CD8-positive, alpha-beta T cell (primary cell): ENCODE measurements at regions of chr4 and their contacts with region 1.

Region 1: DNA sequence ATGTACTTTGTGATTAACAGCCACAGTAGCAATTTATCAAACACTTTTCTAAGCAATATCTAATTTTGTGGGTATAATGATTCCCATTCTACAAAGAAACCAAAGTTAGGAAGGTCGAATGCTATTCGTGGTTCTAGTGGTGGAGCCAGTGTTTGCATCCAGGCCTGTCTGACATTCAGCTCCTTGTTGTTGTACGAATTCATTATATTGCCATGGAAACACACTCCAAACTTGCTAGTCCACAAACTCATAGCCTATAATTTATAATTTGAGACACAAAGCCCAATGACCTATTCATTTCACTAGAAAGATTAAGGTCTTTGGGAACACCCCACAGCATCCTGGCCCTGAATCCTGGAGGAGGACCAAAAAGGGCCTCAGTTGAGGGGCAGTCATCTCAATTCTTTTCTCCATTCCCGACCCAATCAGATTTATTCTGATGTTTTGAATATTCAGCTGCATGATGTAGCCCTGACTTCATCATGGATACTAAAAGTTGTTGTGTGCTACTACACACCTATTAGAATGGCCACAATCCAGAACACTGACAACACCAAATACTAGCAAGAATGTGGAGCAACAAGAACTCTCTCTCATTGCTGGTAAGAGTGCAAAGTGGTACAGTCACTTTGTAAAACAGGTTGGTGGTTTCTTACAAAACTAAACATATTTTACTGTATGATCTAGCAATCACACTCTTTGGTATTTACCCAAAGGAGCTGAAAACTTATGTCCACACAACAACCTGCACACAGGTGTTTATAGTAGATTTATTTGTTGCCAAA is 51.8 kb upstream of the FRAS1 start:
- DNase-seq: no peak
- ATAC-seq: no peak
- H3K4me3 ChIP-seq: no peak overlapping the region
- H3K4me3 Mint-ChIP-seq: no peak overlapping the region
- H3K27ac ChIP-seq: no peak overlapping the region
- H3K27ac Mint-ChIP-seq: no peak overlapping the region
- H3K4me1 ChIP-seq: no peaks in the 10 kb centered on the region
- H3K4me1 Mint-ChIP-seq: no peaks in the 10 kb centered on the region
- H3K27me3 ChIP-seq: no peaks in the 10 kb centered on the region
- H3K27me3 Mint-ChIP-seq: peaks cover 5% of the 10 kb centered on the region
- CTCF ChIP-seq: no peak

Region 2: DNA sequence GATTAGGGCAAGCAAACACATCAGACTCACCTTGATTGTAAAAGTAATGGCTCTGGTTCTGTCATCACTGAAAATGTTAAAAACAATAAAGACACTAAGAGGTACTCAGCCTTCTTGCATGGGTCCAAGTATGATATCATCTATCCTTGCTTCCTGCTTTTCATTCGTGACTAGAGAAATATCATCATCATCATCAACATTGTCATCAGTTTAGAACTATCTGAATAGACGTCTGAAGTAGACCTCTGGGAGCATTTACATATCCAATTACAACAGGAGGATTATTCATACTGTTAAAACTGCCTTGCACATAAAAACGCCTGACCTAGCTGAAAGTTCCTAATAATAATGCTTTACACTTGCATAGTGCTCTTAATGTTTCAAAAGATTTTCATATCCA is 42.1 kb after region 1 on chr4:
- CTCF ChIA-PET with region 1: no interaction called
- POLR2A ChIA-PET with region 1: no interaction called
- intact Hi-C with region 1: loop called in 1 of 2 experiments (anchors 1 kb)
- DNase-seq: no peak
- ATAC-seq: no peak
- H3K4me3 ChIP-seq: no peak overlapping the region
- H3K4me3 Mint-ChIP-seq: no peak overlapping the region
- H3K27ac ChIP-seq: no peak overlapping the region
- H3K27ac Mint-ChIP-seq: no peak overlapping the region
- H3K4me1 ChIP-seq: no peaks in the 10 kb centered on the region
- H3K4me1 Mint-ChIP-seq: no peaks in the 10 kb centered on the region
- H3K27me3 ChIP-seq: no peaks in the 10 kb centered on the region
- H3K27me3 Mint-ChIP-seq: peaks cover 8% of the 10 kb centered on the region
- CTCF ChIP-seq: no peak

Region 3: GRCh38 chr4:78362310-78362709 is 357.0 kb after region 1 on chr4:
- CTCF ChIA-PET with region 1: no interaction called
- POLR2A ChIA-PET with region 1: no interaction called
- intact Hi-C with region 1: no loop called
- DNase-seq: no peak
- ATAC-seq: no peak
- H3K4me3 ChIP-seq: no peak overlapping the region
- H3K4me3 Mint-ChIP-seq: no peak overlapping the region
- H3K27ac ChIP-seq: no peak overlapping the region
- H3K27ac Mint-ChIP-seq: no peak overlapping the region
- H3K4me1 ChIP-seq: no peaks in the 10 kb centered on the region
- H3K4me1 Mint-ChIP-seq: no peaks in the 10 kb centered on the region
- H3K27me3 ChIP-seq: no peaks in the 10 kb centered on the region
- H3K27me3 Mint-ChIP-seq: peaks cover 14% of the 10 kb centered on the region
- CTCF ChIP-seq: no peak